ENCODE measurements at regions of chr20 and their contacts with region 1.

Region 1: GRCh38 chr20:35303735-35304491 is 11.7 kb upstream of the FAM83C start:
- DNase-seq: peak; percentile 92
- H3K4me3 Mint-ChIP-seq: no peak overlapping the region
- H3K27ac Mint-ChIP-seq: peak overlapping the region; percentile 94
- H3K4me1 Mint-ChIP-seq: peaks cover 63% of the 10 kb centered on the region
- H3K27me3 Mint-ChIP-seq: no peaks in the 10 kb centered on the region
- CTCF ChIP-seq: peak; percentile 92

Region 2: DNA sequence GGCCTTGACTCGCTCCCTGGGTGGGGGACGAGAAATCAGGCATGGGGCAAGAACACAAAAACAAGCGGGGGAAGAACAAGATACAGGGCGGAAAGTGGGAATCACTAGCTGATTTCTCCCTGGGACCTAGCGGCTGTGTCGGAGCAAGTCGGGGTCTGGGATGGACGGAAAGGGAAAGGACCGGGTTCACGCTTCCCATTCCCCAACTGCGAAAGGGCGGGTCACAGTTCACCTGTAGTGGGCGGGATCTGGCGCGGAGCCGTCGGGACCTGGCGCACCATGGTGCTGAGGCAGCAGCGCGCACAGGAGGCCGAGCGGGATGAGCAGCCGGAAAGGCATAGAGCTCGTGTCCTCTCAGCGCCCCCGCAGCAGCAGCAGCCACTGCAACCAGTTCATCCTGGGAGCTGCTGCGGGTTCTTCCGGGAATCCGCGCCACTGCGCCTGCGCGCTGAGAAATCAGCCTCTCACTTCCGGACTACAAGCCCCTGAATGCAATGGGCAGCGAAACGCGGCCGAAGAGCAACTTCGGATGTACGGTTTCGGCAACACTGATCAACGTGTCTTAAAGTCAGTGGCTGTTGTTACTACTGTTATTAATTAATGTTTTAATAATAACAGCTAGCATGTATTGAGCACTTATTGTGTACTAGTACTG is 156.9 kb before region 1 on chr20 and contains the start of gene EDEM2:
- CTCF ChIA-PET with region 1: interaction called, 12 read pairs
- POLR2A ChIA-PET with region 1: interaction called, 29 read pairs
- intact Hi-C with region 1: loop called (anchors 1 kb)
- DNase-seq: peak; percentile 95
- H3K4me3 Mint-ChIP-seq: peak within 1 kb of the TSS; percentile 94
- H3K27ac Mint-ChIP-seq: peak within 1 kb of the TSS; percentile 95
- H3K4me1 Mint-ChIP-seq: peaks cover 11% of the 10 kb centered on the region
- H3K27me3 Mint-ChIP-seq: no peaks in the 10 kb centered on the region
- CTCF ChIP-seq: no peak
- total RNA-seq, gene EDEM2: 23.6 and 30.2 TPM in 2 replicates

Region 3: DNA sequence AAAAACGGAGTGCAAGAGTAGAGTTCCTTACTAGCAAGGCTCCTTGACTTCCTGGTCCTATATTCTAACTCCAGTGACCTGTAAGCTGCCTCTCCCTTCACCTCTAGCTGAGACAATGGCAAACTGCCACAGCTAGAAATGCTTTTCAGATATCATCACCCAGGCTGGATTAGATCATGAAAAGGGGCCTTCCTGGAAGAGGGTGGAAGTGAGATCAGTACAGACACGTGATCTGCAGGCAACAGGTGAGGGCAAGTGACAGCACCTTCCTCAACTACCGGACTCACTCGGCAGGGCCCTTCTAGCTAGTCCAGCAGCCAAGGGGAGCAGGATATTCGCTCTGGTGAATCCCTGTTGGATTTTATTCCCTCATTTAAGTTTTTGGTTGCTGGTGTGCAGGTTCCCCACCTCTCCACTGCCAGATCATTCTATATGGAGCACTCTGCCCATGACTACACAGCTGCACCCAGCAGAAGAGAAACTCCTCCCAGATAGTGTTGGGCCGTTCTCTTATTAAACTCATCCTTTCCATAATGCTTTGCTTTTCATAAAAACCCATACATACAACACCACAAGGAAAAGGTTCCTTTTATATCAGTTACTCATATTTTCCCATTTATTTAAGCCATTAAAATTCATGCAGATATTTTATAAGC is 14.7 kb after region 1 on chr20:
- CTCF ChIA-PET with region 1: interaction called, 163 read pairs
- POLR2A ChIA-PET with region 1: interaction called, 468 read pairs
- intact Hi-C with region 1: no loop called
- DNase-seq: peak; percentile 94
- H3K4me3 Mint-ChIP-seq: peak overlapping the region; percentile 16
- H3K27ac Mint-ChIP-seq: peak overlapping the region; percentile 87
- H3K4me1 Mint-ChIP-seq: peaks cover 48% of the 10 kb centered on the region
- H3K27me3 Mint-ChIP-seq: no peaks in the 10 kb centered on the region
- CTCF ChIP-seq: no peak

Region 4: DNA sequence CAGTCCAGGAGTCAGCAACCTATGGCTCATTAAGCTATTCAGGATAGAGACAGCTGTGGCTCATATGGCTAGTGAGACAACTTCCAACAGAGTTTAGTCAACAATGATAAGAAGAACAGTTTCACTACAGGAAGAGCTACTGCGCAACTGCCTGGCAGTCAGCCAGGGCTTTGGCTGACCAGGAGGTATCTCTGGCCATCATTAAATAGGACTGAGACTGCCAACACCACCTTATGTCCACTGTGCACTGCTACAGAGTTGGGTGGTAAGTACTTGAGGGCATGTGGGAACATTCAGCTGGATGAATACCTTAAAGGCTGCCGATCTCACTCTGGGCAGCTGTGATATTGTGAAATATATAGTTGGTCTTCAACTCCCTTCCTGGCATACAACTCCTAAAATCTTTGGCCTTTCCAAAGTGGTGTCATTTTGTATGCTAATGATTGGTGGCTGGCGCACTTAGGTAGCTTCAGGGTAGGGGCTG is 40.5 kb after region 1 on chr20:
- CTCF ChIA-PET with region 1: interaction called, 18 read pairs
- POLR2A ChIA-PET with region 1: interaction called, 48 read pairs
- intact Hi-C with region 1: no loop called
- DNase-seq: peak; percentile 85
- H3K4me3 Mint-ChIP-seq: peak overlapping the region; percentile 41
- H3K27ac Mint-ChIP-seq: peak overlapping the region; percentile 67
- H3K4me1 Mint-ChIP-seq: peaks cover 34% of the 10 kb centered on the region
- H3K27me3 Mint-ChIP-seq: no peaks in the 10 kb centered on the region
- CTCF ChIP-seq: no peak

Region 5: DNA sequence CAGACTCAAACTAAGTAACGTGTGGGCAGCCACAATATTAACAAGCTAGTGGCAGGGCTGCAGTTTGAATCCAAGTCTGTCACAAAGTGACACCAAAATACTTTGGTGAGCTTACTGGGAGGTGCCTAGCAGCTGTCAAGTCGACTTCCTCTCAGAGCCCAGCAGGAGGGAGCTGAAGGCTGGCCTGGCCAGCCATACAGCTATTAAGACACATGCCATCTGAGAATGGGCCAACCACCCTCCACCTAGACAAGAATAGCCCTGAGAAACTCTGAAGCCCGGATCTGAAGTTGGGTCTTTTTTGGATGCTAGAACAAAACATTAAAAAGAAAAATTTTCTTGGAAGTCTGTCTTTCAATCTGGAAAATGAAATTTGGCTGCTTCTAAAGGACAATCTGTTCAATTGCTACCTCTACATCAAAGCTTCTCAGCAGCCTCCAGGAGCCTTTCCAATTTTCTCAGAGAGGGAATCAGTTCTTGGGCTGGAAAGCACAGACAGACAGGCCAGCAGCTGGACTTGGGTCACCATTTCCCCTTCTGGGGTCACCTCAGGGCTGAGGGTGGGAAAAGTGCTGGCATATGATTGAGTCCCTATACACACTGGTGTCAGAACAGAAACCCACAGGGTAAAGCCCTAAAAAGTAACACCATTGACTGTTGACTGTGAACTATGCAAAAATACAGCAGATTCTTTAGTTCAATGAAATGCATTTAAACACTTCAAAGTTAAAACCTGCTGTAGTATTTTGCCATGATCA is 64.9 kb after region 1 on chr20:
- CTCF ChIA-PET with region 1: interaction called, 17 read pairs
- POLR2A ChIA-PET with region 1: interaction called, 9 read pairs
- intact Hi-C with region 1: no loop called
- DNase-seq: no peak
- H3K4me3 Mint-ChIP-seq: no peak overlapping the region
- H3K27ac Mint-ChIP-seq: no peak overlapping the region
- H3K4me1 Mint-ChIP-seq: no peaks in the 10 kb centered on the region
- H3K27me3 Mint-ChIP-seq: no peaks in the 10 kb centered on the region
- CTCF ChIP-seq: no peak

Region 6: DNA sequence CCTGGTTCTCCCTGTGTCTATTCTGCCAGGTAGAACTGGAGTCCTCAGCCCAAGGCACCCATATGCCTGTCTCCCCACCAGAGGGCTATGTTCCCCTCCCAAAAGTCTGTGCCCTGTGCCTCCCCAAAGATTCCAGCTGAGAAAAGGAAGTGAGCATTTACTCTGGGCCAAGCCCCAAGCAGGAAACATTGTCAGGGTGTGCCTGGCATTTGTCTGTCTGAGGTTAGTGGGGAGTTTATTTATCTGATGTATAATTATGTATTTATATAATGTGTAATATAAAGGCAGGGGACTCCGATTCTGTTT is 128.5 kb after region 1 on chr20:
- CTCF ChIA-PET with region 1: interaction called, 374 read pairs
- POLR2A ChIA-PET with region 1: interaction called, 253 read pairs
- intact Hi-C with region 1: no loop called
- DNase-seq: no peak
- H3K4me3 Mint-ChIP-seq: no peak overlapping the region
- H3K27ac Mint-ChIP-seq: no peak overlapping the region
- H3K4me1 Mint-ChIP-seq: no peaks in the 10 kb centered on the region
- H3K27me3 Mint-ChIP-seq: no peaks in the 10 kb centered on the region
- CTCF ChIP-seq: no peak

Region 7: GRCh38 chr20:35463455-35464300 is 159.8 kb after region 1 on chr20:
- CTCF ChIA-PET with region 1: interaction called, 33 read pairs
- POLR2A ChIA-PET with region 1: interaction called, 193 read pairs
- intact Hi-C with region 1: no loop called
- DNase-seq: peak; percentile 66
- H3K4me3 Mint-ChIP-seq: no peak overlapping the region
- H3K27ac Mint-ChIP-seq: no peak overlapping the region
- H3K4me1 Mint-ChIP-seq: peaks cover 8% of the 10 kb centered on the region
- H3K27me3 Mint-ChIP-seq: no peaks in the 10 kb centered on the region
- CTCF ChIP-seq: peak; percentile 76